ENCODE measurements at regions of chr14 and their contacts with region 1.

Region 1: DNA sequence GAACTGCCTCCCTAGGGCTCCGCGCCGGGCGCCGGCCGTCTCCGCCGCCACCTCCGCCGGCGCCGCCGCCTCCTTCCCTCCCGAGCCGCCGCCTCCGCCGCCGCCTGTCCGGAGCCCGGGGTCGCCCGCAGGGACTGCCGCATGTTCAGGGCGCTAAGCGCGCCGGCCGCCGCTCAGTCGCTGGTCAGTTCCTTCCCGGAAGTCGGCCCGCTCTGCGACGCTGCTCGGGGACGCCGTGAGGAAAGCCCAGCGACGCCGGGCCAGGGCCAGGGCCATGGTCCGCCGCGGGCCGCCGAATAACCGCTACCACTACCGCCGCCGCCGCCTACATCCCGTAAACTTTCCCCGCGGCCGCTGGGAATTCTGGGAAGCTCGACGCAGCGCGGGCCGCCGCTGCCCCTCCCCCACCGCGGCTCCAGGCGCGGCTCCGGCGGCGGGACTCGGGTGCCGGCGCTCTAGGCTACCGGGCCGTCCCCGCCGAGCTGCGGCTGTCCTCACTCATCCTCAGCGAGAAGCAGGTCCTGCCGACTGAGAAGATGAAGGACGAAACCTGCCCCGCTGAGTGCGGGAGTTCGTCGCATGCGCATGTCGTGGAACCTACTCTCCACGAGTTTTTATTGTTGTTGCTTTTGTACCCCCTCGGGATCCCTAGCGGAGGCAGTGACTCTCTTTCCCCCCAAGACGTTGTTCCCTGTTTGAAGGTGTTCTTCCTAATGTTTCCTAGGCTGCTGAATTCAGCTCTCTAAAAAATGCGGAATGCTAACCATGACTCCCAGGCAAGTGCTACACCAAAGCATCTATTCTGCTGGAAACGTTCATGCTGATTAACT is at the start of gene SAV1:
- DNase-seq: peak; percentile 88
- ATAC-seq: peak; percentile 77
- H3K4me3 ChIP-seq: peak within 1 kb of the TSS; percentile 95
- H3K27ac ChIP-seq: peak within 1 kb of the TSS; percentile 75
- H3K4me1 ChIP-seq: peaks cover 21% of the 10 kb centered on the region
- H3K27me3 ChIP-seq: no peaks in the 10 kb centered on the region
- CTCF ChIP-seq: no peak
- total RNA-seq, gene SAV1: 66.2 and 87.1 TPM in 2 replicates

Region 2: GRCh38 chr14:50388256-50388931 is 279.8 kb before region 1 on chr14:
- CTCF ChIA-PET with region 1: no interaction called
- POLR2A ChIA-PET with region 1: no interaction called
- intact Hi-C with region 1: no loop called
- DNase-seq: no peak
- ATAC-seq: no peak
- H3K4me3 ChIP-seq: no peak overlapping the region
- H3K27ac ChIP-seq: no peak overlapping the region
- H3K4me1 ChIP-seq: no peaks in the 10 kb centered on the region
- H3K27me3 ChIP-seq: no peaks in the 10 kb centered on the region
- CTCF ChIP-seq: no peak

Region 3: DNA sequence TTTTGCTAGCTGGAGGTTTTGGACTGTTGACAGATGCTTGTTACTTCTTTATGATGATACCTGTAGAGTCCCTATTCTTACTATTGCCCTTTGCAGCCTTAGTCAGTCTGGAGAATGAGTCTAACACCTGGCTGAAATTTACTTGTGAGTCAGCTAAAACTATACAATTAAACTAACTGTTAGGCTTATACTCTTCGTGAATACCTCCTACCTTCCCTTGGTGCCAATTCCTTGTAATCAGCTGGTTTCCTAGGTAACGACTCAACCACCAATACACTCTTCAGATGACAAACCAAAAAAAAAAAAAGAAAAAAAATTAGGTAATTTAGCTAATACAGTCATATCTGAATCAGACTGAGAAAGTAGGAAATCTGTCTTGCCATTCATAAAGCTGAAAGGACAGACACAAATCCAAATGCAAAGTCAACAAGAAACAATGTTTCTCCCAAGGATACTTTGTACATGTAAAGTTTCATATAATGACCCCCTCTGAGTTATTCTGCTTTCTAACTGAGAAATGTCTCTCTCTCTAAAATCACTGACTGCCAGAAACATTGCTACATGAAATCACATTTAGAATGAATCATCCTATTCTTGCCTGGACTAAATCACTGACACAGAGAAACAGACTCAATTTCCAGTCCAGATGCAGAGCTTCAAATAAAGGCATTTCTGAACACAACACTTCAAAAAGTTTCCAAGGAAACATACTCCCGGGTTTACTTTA is 215.1 kb before region 1 on chr14:
- CTCF ChIA-PET with region 1: no interaction called
- POLR2A ChIA-PET with region 1: interaction called, 17 read pairs
- intact Hi-C with region 1: no loop called
- DNase-seq: peak; percentile 80
- ATAC-seq: peak; percentile 82
- H3K4me3 ChIP-seq: 0 out of 2 replicates have a peak overlapping the region, but pooled peaks have one; percentile 10
- H3K27ac ChIP-seq: peak overlapping the region; percentile 94
- H3K4me1 ChIP-seq: peaks cover 31% of the 10 kb centered on the region
- H3K27me3 ChIP-seq: no peaks in the 10 kb centered on the region
- CTCF ChIP-seq: no peak

Region 4: DNA sequence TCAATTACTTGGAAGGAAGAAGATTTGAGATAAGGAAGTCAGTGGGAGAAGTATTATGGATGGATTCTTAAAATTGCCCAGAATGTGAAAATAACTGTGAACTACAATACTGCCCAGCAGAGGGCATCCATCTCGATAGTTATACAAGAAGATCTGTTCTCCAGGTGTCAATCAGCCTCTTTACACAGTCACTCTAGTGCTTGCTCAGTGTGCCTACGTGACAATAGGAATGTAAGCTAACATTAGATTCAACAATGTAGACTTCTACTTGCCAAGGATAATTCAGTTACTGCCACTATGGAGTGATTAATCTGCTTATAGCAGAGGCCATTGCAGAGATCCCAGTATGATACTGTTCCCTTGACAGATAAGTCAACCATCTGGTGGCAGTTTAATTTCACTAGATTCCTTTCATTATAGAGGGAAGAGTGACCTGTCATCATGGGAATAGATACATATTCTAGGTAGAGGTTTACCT is 125.2 kb before region 1 on chr14:
- CTCF ChIA-PET with region 1: no interaction called
- POLR2A ChIA-PET with region 1: no interaction called
- intact Hi-C with region 1: loop called (anchors 5 kb)
- DNase-seq: peak; percentile 87
- ATAC-seq: peak; percentile 82
- H3K4me3 ChIP-seq: no peak overlapping the region
- H3K27ac ChIP-seq: no peak overlapping the region
- H3K4me1 ChIP-seq: peaks cover 16% of the 10 kb centered on the region
- H3K27me3 ChIP-seq: no peaks in the 10 kb centered on the region
- CTCF ChIP-seq: peak; percentile 91

Region 5: GRCh38 chr14:50619556-50620141 is 48.6 kb before region 1 on chr14:
- CTCF ChIA-PET with region 1: no interaction called
- POLR2A ChIA-PET with region 1: interaction called, 6 read pairs
- intact Hi-C with region 1: loop called (anchors 1 kb)
- DNase-seq: peak; percentile 72
- ATAC-seq: peak; percentile 93
- H3K4me3 ChIP-seq: no peak overlapping the region
- H3K27ac ChIP-seq: no peak overlapping the region
- H3K4me1 ChIP-seq: peaks cover 8% of the 10 kb centered on the region
- H3K27me3 ChIP-seq: no peaks in the 10 kb centered on the region
- CTCF ChIP-seq: peak; percentile 89

Region 6: GRCh38 chr14:50658203-50658602 is 10.0 kb before region 1 on chr14:
- CTCF ChIA-PET with region 1: no interaction called
- POLR2A ChIA-PET with region 1: no interaction called
- intact Hi-C with region 1: loop called (anchors 1 kb)
- DNase-seq: peak; percentile 38
- ATAC-seq: peak; percentile 37
- H3K4me3 ChIP-seq: peak overlapping the region; percentile 6; the same call in 1 of the 2 replicates
- H3K27ac ChIP-seq: peak overlapping the region; percentile 2; the same call in 1 of the 2 replicates
- H3K4me1 ChIP-seq: peaks cover 29% of the 10 kb centered on the region
- H3K27me3 ChIP-seq: no peaks in the 10 kb centered on the region
- CTCF ChIP-seq: no peak

Region 7: DNA sequence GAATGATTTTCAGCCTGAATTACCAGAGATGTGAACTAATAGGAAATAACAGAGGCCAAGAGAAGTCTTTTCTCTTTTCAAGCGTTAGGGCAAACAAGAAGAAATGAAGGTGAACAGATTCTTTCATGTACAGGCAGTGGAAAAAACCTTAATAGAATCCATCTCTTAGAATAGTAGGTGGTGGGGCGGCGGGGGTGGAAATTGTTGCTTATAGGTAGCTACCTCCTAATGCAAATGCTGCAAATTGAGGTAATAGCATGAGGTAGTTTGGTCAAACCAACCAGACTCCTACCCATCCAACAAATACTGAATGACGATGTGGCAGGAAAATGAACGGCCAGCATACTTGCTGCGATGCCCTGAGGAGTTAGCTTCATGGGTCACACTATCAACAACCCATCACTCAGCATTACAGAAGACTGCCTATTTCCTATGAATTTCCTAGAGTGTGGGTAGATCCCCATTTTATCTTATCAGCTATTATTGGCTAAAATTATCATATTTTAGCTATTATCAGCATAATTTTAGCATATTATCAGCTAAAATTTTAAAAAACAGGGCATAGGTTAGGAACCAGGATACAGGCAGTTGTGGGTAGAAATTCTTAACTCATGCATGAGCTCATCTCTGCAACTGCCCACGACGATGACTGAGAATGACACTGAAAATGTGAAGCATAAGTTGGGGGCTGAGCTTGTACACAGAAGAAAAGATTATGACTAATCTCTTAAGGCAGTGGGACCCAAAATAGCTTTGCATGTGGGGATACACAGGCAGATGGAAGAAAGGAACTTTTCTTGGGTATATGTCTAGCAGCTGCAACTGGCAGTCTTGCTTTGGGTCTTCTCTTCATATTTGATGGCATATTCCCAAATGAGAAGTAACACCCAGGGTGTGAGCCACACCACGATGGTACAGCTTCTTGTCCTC is 94.1 kb after region 1 on chr14:
- CTCF ChIA-PET with region 1: no interaction called
- POLR2A ChIA-PET with region 1: interaction called, 9 read pairs
- intact Hi-C with region 1: loop called (anchors 2 kb)
- DNase-seq: peak; percentile 86
- ATAC-seq: peak; percentile 36
- H3K4me3 ChIP-seq: peak overlapping the region; percentile 25; the same call in 1 of the 2 replicates
- H3K27ac ChIP-seq: peak overlapping the region; percentile 94
- H3K4me1 ChIP-seq: peaks cover 29% of the 10 kb centered on the region
- H3K27me3 ChIP-seq: no peaks in the 10 kb centered on the region
- CTCF ChIP-seq: no peak

Region 8: GRCh38 chr14:51094901-51095853 is 427.0 kb after region 1 on chr14 and contains the start of gene TRIM9:
- CTCF ChIA-PET with region 1: no interaction called
- POLR2A ChIA-PET with region 1: no interaction called
- intact Hi-C with region 1: no loop called
- DNase-seq: peak; percentile 99
- ATAC-seq: peak; percentile 97
- H3K4me3 ChIP-seq: peak within 1 kb of the TSS; percentile 66
- H3K27ac ChIP-seq: peak within 1 kb of the TSS; percentile 45
- H3K4me1 ChIP-seq: peaks cover 12% of the 10 kb centered on the region; the same call in 1 of the 2 replicates
- H3K27me3 ChIP-seq: no peaks in the 10 kb centered on the region
- CTCF ChIP-seq: no peak
- total RNA-seq, gene TRIM9: 2.5 and 2.6 TPM in 2 replicates